ENCODE measurements at regions of chr14 and their contacts with region 1.

Region 1: GRCh38 chr14:49858383-49858782 is 5.8 kb upstream of the NEMF start:
- DNase-seq: no peak
- H3K4me3 ChIP-seq: no peak overlapping the region
- H3K27ac ChIP-seq: no peak overlapping the region
- H3K4me1 ChIP-seq: no peaks in the 10 kb centered on the region
- H3K27me3 ChIP-seq: no peaks in the 10 kb centered on the region
- CTCF ChIP-seq: no peak

Region 2: GRCh38 chr14:50109342-50109741 is 251.0 kb after region 1 on chr14:
- intact Hi-C with region 1: loop called (anchors 5 kb)
- DNase-seq: no peak
- H3K4me3 ChIP-seq: no peak overlapping the region
- H3K27ac ChIP-seq: no peak overlapping the region
- H3K4me1 ChIP-seq: no peaks in the 10 kb centered on the region
- H3K27me3 ChIP-seq: no peaks in the 10 kb centered on the region
- CTCF ChIP-seq: no peak

Measured in colonic mucosa (tissue), 4 donors.